Caco-2 (cell line): ENCODE measurements at regions of chr4 and their contacts with region 1.

Region 1: DNA sequence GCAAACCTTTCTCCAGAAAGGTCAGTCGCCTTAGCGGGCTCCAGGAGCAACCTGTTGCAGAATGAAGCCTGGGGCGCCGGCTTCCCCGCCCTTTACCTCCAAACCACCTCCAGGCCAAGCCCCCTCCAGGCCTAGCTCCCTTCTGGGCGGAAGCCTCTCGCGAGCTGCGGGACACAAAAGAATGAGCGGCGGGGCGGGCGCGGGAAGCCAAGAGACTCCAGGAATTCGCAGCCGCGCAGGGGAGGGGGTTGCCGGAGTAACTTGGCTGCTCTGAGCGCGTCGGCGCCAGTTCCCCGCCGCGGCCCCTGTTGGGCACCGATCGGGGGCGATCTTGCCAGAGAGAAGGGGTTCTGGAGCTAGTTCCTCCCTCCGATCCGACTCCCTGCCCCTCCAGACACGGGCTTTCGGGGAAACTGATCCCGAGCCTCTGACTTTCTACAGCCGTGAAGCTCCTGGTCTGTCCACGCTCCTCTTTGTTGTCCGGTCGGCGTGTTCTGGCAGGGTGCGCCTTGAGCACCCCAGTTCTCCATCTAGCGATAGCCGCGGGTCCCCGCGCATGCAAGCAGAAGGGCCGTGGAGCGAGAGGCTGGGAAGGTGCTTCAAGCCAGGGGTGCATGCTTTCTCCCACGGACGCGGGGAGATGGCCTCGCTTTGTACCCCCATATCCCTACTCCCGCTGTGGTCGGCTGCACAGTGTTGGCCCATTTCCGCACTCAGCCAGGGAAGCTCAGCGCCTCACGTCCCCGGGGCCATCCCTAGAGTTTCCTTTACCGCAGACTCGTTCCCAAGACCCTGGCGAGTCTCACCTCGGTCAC is 1.2 kb downstream of the PROM1 start:
- DNase-seq: peak; percentile 80 to 81
- H3K4me3 ChIP-seq: peak overlapping the region; percentile 98
- H3K4me3 Mint-ChIP-seq: peak overlapping the region; percentile 91
- H3K27ac Mint-ChIP-seq: peak overlapping the region; percentile 85
- H3K4me1 ChIP-seq: peaks cover 11% of the 10 kb centered on the region
- H3K4me1 Mint-ChIP-seq: peaks cover 23% of the 10 kb centered on the region
- H3K27me3 ChIP-seq: no peaks in the 10 kb centered on the region
- H3K27me3 Mint-ChIP-seq: no peaks in the 10 kb centered on the region
- CTCF ChIP-seq: no peak

Region 2: GRCh38 chr4:15882675-15883086 is 200.0 kb before region 1 on chr4:
- CTCF ChIA-PET with region 1: interaction called, 10 read pairs
- POLR2A ChIA-PET with region 1: no interaction called
- intact Hi-C with region 1: no loop called
- DNase-seq: peak; percentile 53 to 71
- H3K4me3 ChIP-seq: no peak overlapping the region
- H3K4me3 Mint-ChIP-seq: no peak overlapping the region
- H3K27ac Mint-ChIP-seq: no peak overlapping the region
- H3K4me1 ChIP-seq: no peaks in the 10 kb centered on the region
- H3K4me1 Mint-ChIP-seq: no peaks in the 10 kb centered on the region
- H3K27me3 ChIP-seq: no peaks in the 10 kb centered on the region
- H3K27me3 Mint-ChIP-seq: peaks cover 2% of the 10 kb centered on the region
- CTCF ChIP-seq: peak; percentile 85 to 88

Region 3: DNA sequence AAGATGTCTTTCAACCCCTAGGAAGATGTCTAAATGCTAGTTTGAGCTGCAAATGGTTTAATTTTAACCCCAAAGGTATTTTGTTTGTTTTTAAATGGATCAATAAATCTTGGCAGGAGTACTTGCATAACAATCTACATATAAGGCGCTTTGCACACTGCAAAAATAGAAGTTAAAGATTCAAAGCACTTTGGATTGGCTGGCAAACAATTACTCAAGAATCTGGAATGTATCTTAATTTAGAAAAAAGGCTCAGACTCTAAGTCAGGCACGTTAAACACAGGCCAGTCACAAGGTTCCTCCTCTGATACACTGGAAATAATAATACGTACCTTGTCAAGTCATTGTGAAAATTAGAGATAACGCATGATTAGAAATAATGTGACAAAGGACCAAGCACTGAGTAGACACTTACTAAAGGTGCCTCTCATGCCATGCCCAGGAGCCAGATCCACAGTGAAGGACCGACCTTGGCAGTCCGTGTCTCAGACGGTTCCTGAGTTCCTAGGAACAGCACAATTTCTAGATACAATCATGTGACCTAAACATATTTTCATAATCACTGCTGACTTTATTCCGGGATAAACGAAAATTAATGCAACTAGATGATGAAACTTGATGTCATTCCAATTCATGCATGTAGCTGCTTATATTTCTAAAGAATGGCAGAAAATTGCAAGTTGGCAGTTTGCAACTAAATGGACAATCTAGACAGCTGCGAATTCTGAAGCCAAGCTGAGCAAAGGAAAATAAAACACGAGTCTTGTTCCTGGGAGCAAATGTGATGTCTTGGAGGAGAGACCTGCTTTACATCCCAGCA is 48.4 kb before region 1 on chr4:
- CTCF ChIA-PET with region 1: no interaction called
- POLR2A ChIA-PET with region 1: interaction called, 3 read pairs
- intact Hi-C with region 1: loop called (anchors 1 kb)
- DNase-seq: peak; percentile 44 to 62
- H3K4me3 ChIP-seq: no peak overlapping the region
- H3K4me3 Mint-ChIP-seq: peak overlapping the region; percentile 25
- H3K27ac Mint-ChIP-seq: no peak overlapping the region
- H3K4me1 ChIP-seq: peaks cover 91% of the 10 kb centered on the region
- H3K4me1 Mint-ChIP-seq: peaks cover 42% of the 10 kb centered on the region
- H3K27me3 ChIP-seq: no peaks in the 10 kb centered on the region
- H3K27me3 Mint-ChIP-seq: no peaks in the 10 kb centered on the region
- CTCF ChIP-seq: no peak

Region 4: DNA sequence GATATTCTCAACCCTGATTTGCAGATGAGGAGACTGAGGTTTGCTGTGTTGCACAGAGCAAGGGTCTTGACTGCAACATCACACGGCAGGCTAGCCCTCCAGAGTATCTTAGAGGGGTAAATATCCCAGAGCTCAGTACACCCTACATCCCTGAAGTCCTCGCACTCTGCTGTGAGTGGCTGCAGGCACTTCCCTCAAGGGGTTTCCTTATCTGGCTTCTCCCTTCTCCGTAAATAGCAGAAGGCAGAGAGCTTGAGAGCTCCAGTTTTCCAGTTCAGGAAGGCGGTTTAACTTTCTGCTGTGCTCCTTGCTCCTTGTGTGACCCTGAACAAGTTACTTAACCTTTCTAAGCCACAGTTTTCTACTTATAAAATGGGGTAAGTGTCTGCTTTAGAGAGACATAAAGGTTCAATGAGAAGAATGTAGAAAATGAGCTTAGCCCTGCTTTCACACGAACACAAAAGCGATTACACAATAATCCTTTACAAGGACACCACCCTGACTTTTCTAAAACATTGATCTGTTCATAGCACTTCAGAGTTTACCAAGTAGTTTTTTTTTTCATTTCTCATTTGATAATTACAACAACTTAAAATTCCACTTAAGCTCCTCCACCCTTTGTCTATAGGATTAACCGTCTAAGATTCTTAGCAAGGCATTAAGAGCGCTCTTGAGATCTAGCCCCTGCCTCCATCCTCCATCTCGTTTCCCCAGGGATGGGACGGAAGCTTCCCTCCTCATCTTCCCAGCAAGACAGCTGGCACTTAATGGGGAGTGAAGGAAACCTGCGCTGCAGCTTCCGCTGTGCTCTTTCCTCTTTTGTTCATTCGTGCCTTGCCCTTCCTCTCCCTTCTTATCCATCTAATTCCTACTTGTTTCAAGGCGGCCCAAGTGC is 75.2 kb after region 1 on chr4:
- CTCF ChIA-PET with region 1: no interaction called
- POLR2A ChIA-PET with region 1: no interaction called
- intact Hi-C with region 1: loop called (anchors 1 kb)
- DNase-seq: peak in 1 of 2 experiments; percentile 5
- H3K4me3 ChIP-seq: no peak overlapping the region
- H3K4me3 Mint-ChIP-seq: no peak overlapping the region
- H3K27ac Mint-ChIP-seq: no peak overlapping the region
- H3K4me1 ChIP-seq: peaks cover 19% of the 10 kb centered on the region; the same call in 1 of the 2 replicates
- H3K4me1 Mint-ChIP-seq: peaks cover 18% of the 10 kb centered on the region
- H3K27me3 ChIP-seq: no peaks in the 10 kb centered on the region
- H3K27me3 Mint-ChIP-seq: no peaks in the 10 kb centered on the region
- CTCF ChIP-seq: no peak

Region 5: GRCh38 chr4:16253127-16253960 is 170.7 kb after region 1 on chr4:
- CTCF ChIA-PET with region 1: no interaction called
- POLR2A ChIA-PET with region 1: no interaction called
- intact Hi-C with region 1: loop called (anchors 5 kb)
- DNase-seq: no peak
- H3K4me3 ChIP-seq: no peak overlapping the region
- H3K4me3 Mint-ChIP-seq: no peak overlapping the region
- H3K27ac Mint-ChIP-seq: peak overlapping the region; percentile 39
- H3K4me1 ChIP-seq: peaks cover 34% of the 10 kb centered on the region
- H3K4me1 Mint-ChIP-seq: peaks cover 43% of the 10 kb centered on the region
- H3K27me3 ChIP-seq: no peaks in the 10 kb centered on the region
- H3K27me3 Mint-ChIP-seq: no peaks in the 10 kb centered on the region
- CTCF ChIP-seq: no peak